CD8-positive, alpha-beta T cell (primary cell): ENCODE measurements at regions of chr15 and their contacts with region 1.

Region 1: DNA sequence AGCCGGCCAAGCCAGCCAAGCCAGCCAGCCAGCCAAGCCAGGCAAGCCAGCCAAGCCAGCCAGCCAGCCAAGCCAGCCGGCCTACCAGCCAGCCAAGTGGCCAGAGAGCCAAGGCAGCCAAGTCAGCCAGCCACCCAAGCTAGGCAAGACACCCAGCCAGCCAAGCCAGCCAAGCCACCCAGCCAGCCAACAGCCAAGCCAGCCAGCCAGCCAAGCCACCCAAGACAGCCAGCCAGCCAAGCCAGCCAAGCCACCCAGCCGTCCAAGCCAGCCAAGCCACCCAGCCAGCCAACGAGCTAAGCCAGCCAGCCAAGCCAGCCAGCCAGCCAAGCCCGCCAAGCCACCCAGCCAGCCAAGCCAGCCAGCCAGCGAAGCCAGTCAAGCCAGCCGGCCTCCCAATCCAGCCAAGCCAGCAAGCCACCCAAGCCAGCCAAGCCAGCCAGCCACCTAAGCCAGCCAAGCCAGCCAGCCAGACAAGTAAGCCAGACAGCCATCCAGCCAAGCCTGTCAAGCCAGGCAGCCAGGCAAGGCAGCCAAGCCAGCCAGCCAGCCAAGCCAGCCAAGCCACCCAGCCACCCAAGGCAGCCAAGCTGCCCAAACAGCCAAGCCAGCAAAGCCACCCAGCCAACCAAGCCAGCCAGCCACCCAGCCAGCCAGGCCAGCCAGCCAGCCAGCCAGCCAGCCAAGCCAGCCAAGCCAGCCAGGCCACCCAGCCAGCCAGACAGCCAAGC is 200.5 kb downstream of the GOLGA6L6 start:
- DNase-seq: peak in 7 of 9 experiments; percentile 29 to 70 (median 37)
- ATAC-seq: no peak
- H3K4me3 ChIP-seq: no peak overlapping the region
- H3K4me3 Mint-ChIP-seq: no peak overlapping the region
- H3K27ac ChIP-seq: no peak overlapping the region
- H3K27ac Mint-ChIP-seq: no peak overlapping the region
- H3K4me1 ChIP-seq: no peaks in the 10 kb centered on the region
- H3K4me1 Mint-ChIP-seq: no peaks in the 10 kb centered on the region
- H3K27me3 ChIP-seq: peaks cover 0 to 14% of the 10 kb centered on the region in 2 experiments
- H3K27me3 Mint-ChIP-seq: no peaks in the 10 kb centered on the region
- CTCF ChIP-seq: no peak

Region 2: GRCh38 chr15:20280933-20281463 is 60.1 kb before region 1 on chr15:
- CTCF ChIA-PET with region 1: no interaction called
- POLR2A ChIA-PET with region 1: no interaction called
- intact Hi-C with region 1: loop called in 1 of 2 experiments (anchors 2 kb)
- DNase-seq: no peak
- ATAC-seq: no peak
- H3K4me3 ChIP-seq: no peak overlapping the region
- H3K4me3 Mint-ChIP-seq: no peak overlapping the region
- H3K27ac ChIP-seq: no peak overlapping the region
- H3K27ac Mint-ChIP-seq: no peak overlapping the region
- H3K4me1 ChIP-seq: no peaks in the 10 kb centered on the region
- H3K4me1 Mint-ChIP-seq: no peaks in the 10 kb centered on the region
- H3K27me3 ChIP-seq: no peaks in the 10 kb centered on the region
- H3K27me3 Mint-ChIP-seq: no peaks in the 10 kb centered on the region
- CTCF ChIP-seq: no peak